ENCODE measurements at regions of chr9 and their contacts with region 1.

Region 1: DNA sequence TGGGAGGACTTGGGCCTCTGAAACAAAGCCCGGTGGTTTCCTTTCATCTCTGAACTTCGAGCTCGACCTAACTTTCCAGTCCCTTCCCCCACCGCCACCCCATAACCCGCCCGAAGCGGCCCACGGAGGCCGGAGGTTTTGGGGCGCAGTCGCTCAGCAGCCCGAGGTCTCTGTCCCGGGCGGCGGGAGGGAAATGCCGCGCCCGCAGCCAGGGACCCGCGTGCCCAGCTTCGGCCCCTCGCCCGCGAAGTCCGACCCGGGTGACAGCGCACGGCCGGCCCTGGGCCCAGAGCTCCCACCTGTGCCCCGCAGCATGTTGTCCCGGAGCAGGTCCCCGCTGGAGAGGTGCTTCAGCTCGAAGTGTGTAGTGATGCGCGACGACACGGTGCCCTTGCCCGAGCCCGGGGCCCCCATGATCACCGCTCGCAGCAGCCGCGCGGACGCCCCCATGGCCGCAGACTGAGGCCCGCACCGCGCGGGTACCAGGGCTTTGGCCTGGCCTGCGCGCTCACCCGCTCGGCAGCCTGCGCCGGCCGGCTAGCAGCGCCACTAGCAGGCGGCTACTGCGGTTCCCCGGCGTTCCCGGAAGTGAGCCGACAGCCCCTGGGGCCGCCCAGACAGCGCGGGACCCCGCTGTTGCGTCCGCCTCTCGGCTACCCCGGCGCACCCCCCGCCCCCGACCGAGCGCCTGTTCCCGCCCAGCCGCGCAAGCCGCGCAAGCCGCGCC is at the start of gene AK3:
- DNase-seq: peak; percentile 85
- H3K4me3 ChIP-seq: peak within 1 kb of the TSS; percentile 69 to 94 (median 90)
- H3K27ac ChIP-seq: peak within 1 kb of the TSS; percentile 77
- H3K4me1 ChIP-seq: peaks cover 10% of the 10 kb centered on the region
- H3K27me3 ChIP-seq: no peaks in the 10 kb centered on the region
- CTCF ChIP-seq: peak; percentile 7 to 23
- POLR2A ChIP-seq: peak; percentile 88
- total RNA-seq, gene AK3: 38.1 and 42.3 TPM in 2 replicates

Region 2: DNA sequence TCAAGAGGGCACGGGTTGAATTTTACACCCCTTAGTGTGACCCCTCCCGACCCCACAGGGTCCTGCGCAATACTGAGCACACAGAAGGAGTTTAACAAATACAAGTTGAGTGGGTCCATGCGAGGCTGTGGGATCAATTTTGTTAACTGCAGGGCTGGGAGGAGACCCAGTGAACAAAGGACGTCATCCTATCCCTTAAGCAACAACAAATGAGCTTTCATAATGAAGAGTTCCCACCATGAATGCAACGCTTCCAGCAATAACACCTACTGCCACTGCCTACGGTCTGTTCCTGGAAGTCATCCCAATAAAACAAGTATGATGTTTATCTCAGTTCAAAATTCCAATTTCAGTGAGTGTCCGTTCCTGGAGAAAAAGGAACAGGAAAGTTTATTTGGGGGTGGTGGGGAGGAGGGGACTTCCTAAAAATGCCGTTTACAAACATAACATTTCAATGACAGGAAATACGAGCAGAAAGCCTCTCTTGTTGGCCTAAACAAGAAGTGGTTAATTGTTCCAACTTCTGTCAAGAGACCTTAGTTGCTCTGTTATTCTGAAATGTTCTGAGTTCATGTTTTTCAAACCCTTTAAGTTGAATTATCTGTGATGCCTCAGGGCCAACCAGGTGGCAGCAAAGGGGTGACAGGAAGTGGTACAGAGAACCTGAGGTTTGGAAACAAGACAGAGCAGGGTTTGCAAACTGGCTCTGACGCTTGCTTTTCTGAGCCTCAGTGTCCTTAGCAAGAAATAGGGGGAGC is 144.5 kb before region 1 on chr9:
- CTCF ChIA-PET with region 1: no interaction called
- POLR2A ChIA-PET with region 1: no interaction called
- dilution Hi-C with region 1: no loop called
- intact Hi-C with region 1: loop called (anchors 5 kb)
- DNase-seq: peak; percentile 89
- H3K4me3 ChIP-seq: peak overlapping the region in 1 of 3 experiments; percentile 11
- H3K27ac ChIP-seq: peak overlapping the region; percentile 58
- H3K4me1 ChIP-seq: peaks cover 17% of the 10 kb centered on the region
- H3K27me3 ChIP-seq: no peaks in the 10 kb centered on the region
- CTCF ChIP-seq: no peak
- POLR2A ChIP-seq: peak; percentile 19

Region 3: GRCh38 chr9:4662108-4662988 is 78.5 kb before region 1 on chr9 and contains the start of gene PLPP6:
- CTCF ChIA-PET with region 1: no interaction called
- POLR2A ChIA-PET with region 1: no interaction called
- dilution Hi-C with region 1: no loop called
- intact Hi-C with region 1: loop called (anchors 1 kb)
- DNase-seq: peak; percentile 76
- H3K4me3 ChIP-seq: peak within 1 kb of the TSS; percentile 57 to 81 (median 71)
- H3K27ac ChIP-seq: peak within 1 kb of the TSS; percentile 10
- H3K4me1 ChIP-seq: peaks cover 32% of the 10 kb centered on the region
- H3K27me3 ChIP-seq: no peaks in the 10 kb centered on the region
- CTCF ChIP-seq: peak; percentile 18 to 57
- POLR2A ChIP-seq: peak; percentile 74
- total RNA-seq, gene PLPP6: 5.4 and 6.4 TPM in 2 replicates

Region 4: GRCh38 chr9:4679268-4680172 is 61.3 kb before region 1 on chr9 and contains the start of gene CDC37L1:
- CTCF ChIA-PET with region 1: interaction called, 5 read pairs
- POLR2A ChIA-PET with region 1: no interaction called
- dilution Hi-C with region 1: no loop called
- intact Hi-C with region 1: loop called (anchors 2 kb)
- DNase-seq: peak; percentile 98
- H3K4me3 ChIP-seq: peak within 1 kb of the TSS; percentile 69 to 84 (median 75)
- H3K27ac ChIP-seq: peak within 1 kb of the TSS; percentile 71
- H3K4me1 ChIP-seq: peaks cover 6% of the 10 kb centered on the region
- H3K27me3 ChIP-seq: no peaks in the 10 kb centered on the region
- CTCF ChIP-seq: peak; percentile 60 to 78
- POLR2A ChIP-seq: peak; percentile 98
- total RNA-seq, gene CDC37L1: 6.8 and 8.9 TPM in 2 replicates

Measured in endothelial cell of umbilical vein (primary cell).